Caco-2 (cell line): ENCODE measurements at regions of chr5 and their contacts with region 1.

Region 1: GRCh38 chr5:125026896-125027732 is 280.7 kb upstream of the ZNF608 start:
- DNase-seq: peak; percentile 70 to 84
- H3K4me3 ChIP-seq: no peak overlapping the region
- H3K4me3 Mint-ChIP-seq: peak overlapping the region; percentile 6
- H3K27ac Mint-ChIP-seq: peak overlapping the region; percentile 59
- H3K4me1 ChIP-seq: peaks cover 26% of the 10 kb centered on the region
- H3K4me1 Mint-ChIP-seq: peaks cover 46% of the 10 kb centered on the region
- H3K27me3 ChIP-seq: no peaks in the 10 kb centered on the region
- H3K27me3 Mint-ChIP-seq: no peaks in the 10 kb centered on the region
- CTCF ChIP-seq: no peak

Region 2: GRCh38 chr5:124979251-124979650 is 47.9 kb before region 1 on chr5:
- CTCF ChIA-PET with region 1: no interaction called
- POLR2A ChIA-PET with region 1: no interaction called
- intact Hi-C with region 1: no loop called
- DNase-seq: peak; percentile 67
- H3K4me3 ChIP-seq: no peak overlapping the region
- H3K4me3 Mint-ChIP-seq: peak overlapping the region; percentile 32
- H3K27ac Mint-ChIP-seq: peak overlapping the region; percentile 38
- H3K4me1 ChIP-seq: peaks cover 35% of the 10 kb centered on the region
- H3K4me1 Mint-ChIP-seq: peaks cover 26% of the 10 kb centered on the region
- H3K27me3 ChIP-seq: no peaks in the 10 kb centered on the region
- H3K27me3 Mint-ChIP-seq: no peaks in the 10 kb centered on the region
- CTCF ChIP-seq: no peak

Region 3: GRCh38 chr5:125113328-125113727 is 86.2 kb after region 1 on chr5:
- CTCF ChIA-PET with region 1: no interaction called
- POLR2A ChIA-PET with region 1: no interaction called
- intact Hi-C with region 1: loop called (anchors 5 kb)
- DNase-seq: no peak
- H3K4me3 ChIP-seq: no peak overlapping the region
- H3K4me3 Mint-ChIP-seq: no peak overlapping the region
- H3K27ac Mint-ChIP-seq: no peak overlapping the region
- H3K4me1 ChIP-seq: peaks cover 22% of the 10 kb centered on the region
- H3K4me1 Mint-ChIP-seq: peaks cover 18% of the 10 kb centered on the region
- H3K27me3 ChIP-seq: no peaks in the 10 kb centered on the region
- H3K27me3 Mint-ChIP-seq: no peaks in the 10 kb centered on the region
- CTCF ChIP-seq: no peak

Region 4: GRCh38 chr5:125176009-125176477 is 148.9 kb after region 1 on chr5:
- CTCF ChIA-PET with region 1: no interaction called
- POLR2A ChIA-PET with region 1: no interaction called
- intact Hi-C with region 1: loop called (anchors 1 kb)
- DNase-seq: peak in 1 of 2 experiments; percentile 22
- H3K4me3 ChIP-seq: no peak overlapping the region
- H3K4me3 Mint-ChIP-seq: no peak overlapping the region
- H3K27ac Mint-ChIP-seq: peak overlapping the region; percentile 62
- H3K4me1 ChIP-seq: peaks cover 10% of the 10 kb centered on the region
- H3K4me1 Mint-ChIP-seq: peaks cover 7% of the 10 kb centered on the region
- H3K27me3 ChIP-seq: no peaks in the 10 kb centered on the region
- H3K27me3 Mint-ChIP-seq: no peaks in the 10 kb centered on the region
- CTCF ChIP-seq: no peak